MCF 10A (cell line): ENCODE measurements at regions of chr15 and their contacts with region 1.

Region 1: DNA sequence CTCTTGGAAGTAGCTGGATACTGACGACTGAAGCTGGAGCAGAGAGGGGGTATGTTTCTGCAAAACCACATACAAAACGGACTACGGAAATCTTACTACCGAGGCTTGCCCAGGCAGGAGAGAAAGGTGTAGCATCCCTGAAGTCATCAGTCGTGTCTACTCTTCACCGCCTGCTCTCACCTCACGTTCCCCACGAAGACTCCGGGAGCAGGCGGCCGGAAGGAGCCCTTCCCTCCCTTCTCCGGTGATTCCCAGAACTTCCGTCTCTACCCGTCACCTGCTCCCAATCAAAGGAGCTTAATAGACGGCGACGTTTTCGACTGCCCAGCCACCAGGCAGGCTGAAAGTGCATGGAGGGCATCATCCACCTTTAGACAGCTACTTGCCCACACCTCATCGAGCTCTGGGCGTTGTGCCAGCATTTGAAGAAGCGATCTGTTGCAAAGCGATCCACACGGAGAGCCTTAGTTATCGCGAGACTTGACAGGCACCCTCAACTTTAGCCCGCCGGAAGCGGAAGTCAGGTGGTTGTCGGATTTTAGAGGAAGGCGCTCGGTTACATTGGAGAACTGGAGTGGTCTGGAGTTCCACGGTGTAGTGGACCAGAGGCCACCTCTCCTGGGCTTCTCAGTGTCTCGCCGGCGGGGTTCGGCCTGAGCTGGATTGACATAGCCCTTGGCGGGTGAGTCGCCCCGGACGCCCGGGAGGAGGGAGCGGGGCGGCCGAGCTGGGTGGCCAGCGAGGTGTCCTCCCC is at the start of gene RAMAC:
- DNase-seq: peak; percentile 96
- H3K4me3 Mint-ChIP-seq: peak within 1 kb of the TSS; percentile 98
- H3K27ac Mint-ChIP-seq: peak within 1 kb of the TSS; percentile 72
- H3K4me1 Mint-ChIP-seq: peaks cover 4% of the 10 kb centered on the region
- H3K27me3 Mint-ChIP-seq: no peaks in the 10 kb centered on the region
- CTCF ChIP-seq: no peak
- total RNA-seq, gene RAMAC: 21.0 and 25.6 TPM in 2 replicates

Region 2: GRCh38 chr15:82809404-82810060 is 176.3 kb before region 1 on chr15 and contains the start of gene WHAMM:
- CTCF ChIA-PET with region 1: no interaction called
- POLR2A ChIA-PET with region 1: interaction called, 44 read pairs
- intact Hi-C with region 1: no loop called
- DNase-seq: peak; percentile 100
- H3K4me3 Mint-ChIP-seq: peak within 1 kb of the TSS; percentile 84
- H3K27ac Mint-ChIP-seq: peak within 1 kb of the TSS; percentile 84
- H3K4me1 Mint-ChIP-seq: peaks cover 22% of the 10 kb centered on the region
- H3K27me3 Mint-ChIP-seq: no peaks in the 10 kb centered on the region
- CTCF ChIP-seq: no peak
- total RNA-seq, gene WHAMM: 8.2 and 10.1 TPM in 2 replicates

Region 3: DNA sequence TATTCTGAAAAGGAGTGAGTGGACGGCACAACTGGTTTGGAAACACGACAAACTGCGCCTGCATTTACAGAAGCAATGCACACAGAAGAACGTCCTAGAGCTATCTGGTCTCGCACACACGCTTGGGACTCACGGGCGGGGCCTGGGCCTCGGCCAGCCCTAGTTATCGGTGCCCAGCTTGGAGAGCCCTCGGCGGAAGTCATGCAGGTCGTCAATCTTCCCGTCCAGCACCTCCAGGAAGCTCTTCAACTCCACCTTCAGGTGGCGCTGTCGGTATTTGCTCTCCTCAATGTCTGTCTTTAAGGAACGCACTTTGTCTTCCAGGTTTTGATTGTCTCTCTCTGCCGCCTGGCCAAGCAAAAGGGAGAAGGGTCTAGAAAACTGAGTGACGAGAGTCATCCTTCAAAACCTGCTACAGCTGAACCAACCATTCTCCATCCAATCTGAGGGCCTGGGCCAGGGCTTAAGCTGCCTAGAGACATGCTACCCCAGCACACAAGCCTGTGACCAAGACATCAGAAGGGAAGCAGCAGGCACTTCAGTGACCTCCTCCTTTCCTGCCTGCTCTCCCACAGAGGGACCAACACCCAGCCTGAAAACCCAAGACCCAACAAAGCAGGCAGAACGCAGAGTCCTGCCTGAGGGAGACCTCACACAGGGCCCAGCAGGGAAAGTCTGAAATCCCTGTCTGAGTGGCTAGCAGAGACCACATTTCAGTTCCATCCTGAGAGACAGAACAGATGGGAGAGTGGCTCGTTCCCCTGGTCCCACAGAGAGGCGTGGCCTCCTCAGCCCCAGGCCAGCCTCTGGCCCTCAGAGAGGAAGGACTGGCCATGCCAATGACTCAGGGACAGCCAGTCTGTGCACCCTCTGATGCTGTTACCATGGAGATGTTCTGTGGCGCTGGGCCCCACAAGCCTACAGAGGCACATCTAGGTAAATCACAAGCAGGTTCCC is 136.0 kb before region 1 on chr15:
- CTCF ChIA-PET with region 1: interaction called, 4 read pairs
- POLR2A ChIA-PET with region 1: interaction called, 6 read pairs
- intact Hi-C with region 1: loop called (anchors 2 kb)
- DNase-seq: peak; percentile 85
- H3K4me3 Mint-ChIP-seq: no peak overlapping the region
- H3K27ac Mint-ChIP-seq: peak overlapping the region; percentile 16
- H3K4me1 Mint-ChIP-seq: no peaks in the 10 kb centered on the region
- H3K27me3 Mint-ChIP-seq: no peaks in the 10 kb centered on the region
- CTCF ChIP-seq: peak; percentile 53

Region 4: DNA sequence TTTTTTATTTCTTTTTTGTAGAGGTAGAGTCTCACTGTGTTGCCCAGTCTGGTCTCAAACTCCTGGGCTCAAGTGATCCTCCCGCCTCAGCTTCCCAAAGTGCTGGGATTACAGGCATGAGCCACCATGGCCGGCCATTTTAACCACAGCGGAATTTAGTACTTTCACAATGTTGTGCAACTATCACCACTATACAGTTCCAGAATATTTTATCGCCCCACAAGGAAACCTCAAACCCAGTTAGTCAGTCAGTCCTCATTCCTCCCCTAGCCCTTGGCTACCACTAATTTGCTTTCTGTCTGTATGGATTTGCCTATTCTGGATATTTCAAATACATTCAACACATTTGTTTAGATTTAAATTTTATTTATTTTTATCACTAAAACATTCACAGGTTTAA is 17.8 kb before region 1 on chr15:
- CTCF ChIA-PET with region 1: no interaction called
- POLR2A ChIA-PET with region 1: interaction called, 11 read pairs
- intact Hi-C with region 1: no loop called
- DNase-seq: peak; percentile 11
- H3K4me3 Mint-ChIP-seq: no peak overlapping the region
- H3K27ac Mint-ChIP-seq: no peak overlapping the region
- H3K4me1 Mint-ChIP-seq: no peaks in the 10 kb centered on the region
- H3K27me3 Mint-ChIP-seq: no peaks in the 10 kb centered on the region
- CTCF ChIP-seq: no peak

Region 5: GRCh38 chr15:83185561-83185960 is 199.7 kb after region 1 on chr15:
- CTCF ChIA-PET with region 1: no interaction called
- POLR2A ChIA-PET with region 1: no interaction called
- intact Hi-C with region 1: no loop called
- DNase-seq: no peak
- H3K4me3 Mint-ChIP-seq: no peak overlapping the region
- H3K27ac Mint-ChIP-seq: no peak overlapping the region
- H3K4me1 Mint-ChIP-seq: no peaks in the 10 kb centered on the region
- H3K27me3 Mint-ChIP-seq: no peaks in the 10 kb centered on the region
- CTCF ChIP-seq: no peak